A673 (cell line): ENCODE measurements at regions of chr20 and their contacts with region 1.

Region 1: DNA sequence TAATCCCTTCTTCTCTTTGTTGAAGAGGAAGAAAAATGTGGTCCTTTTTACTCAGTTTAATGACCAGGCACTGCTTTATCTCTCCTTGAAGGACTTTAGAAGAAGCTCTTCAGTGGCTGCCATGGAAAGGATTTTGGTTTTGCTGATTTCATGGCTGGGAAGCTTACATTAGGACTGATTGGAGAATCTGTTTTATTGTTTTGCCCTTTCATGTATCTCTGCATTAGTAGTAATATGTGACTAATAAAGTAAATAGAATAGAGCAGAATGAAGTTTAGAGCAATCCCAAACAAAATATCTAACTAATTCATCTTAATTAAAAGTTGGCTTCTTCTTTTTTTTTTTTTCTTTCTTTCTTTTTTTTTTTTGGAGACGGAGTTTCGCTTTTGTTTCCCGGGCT is 502.9 kb downstream of the HAO1 start:
- DNase-seq: no peak
- H3K4me3 ChIP-seq: no peak overlapping the region
- H3K27ac ChIP-seq: no peak overlapping the region
- H3K4me1 ChIP-seq: no peaks in the 10 kb centered on the region
- H3K27me3 ChIP-seq: peaks cover 7% of the 10 kb centered on the region
- CTCF ChIP-seq: no peak

Region 2: GRCh38 chr20:7305976-7306375 is 131.3 kb before region 1 on chr20:
- CTCF ChIA-PET with region 1: no interaction called
- POLR2A ChIA-PET with region 1: no interaction called
- intact Hi-C with region 1: no loop called
- DNase-seq: no peak
- H3K4me3 ChIP-seq: no peak overlapping the region
- H3K27ac ChIP-seq: no peak overlapping the region
- H3K4me1 ChIP-seq: no peaks in the 10 kb centered on the region
- H3K27me3 ChIP-seq: no peaks in the 10 kb centered on the region
- CTCF ChIP-seq: no peak

Region 3: GRCh38 chr20:7333841-7334240 is 103.5 kb before region 1 on chr20:
- CTCF ChIA-PET with region 1: no interaction called
- POLR2A ChIA-PET with region 1: no interaction called
- intact Hi-C with region 1: no loop called
- DNase-seq: no peak
- H3K4me3 ChIP-seq: no peak overlapping the region
- H3K27ac ChIP-seq: no peak overlapping the region
- H3K4me1 ChIP-seq: no peaks in the 10 kb centered on the region
- H3K27me3 ChIP-seq: no peaks in the 10 kb centered on the region
- CTCF ChIP-seq: no peak

Region 4: DNA sequence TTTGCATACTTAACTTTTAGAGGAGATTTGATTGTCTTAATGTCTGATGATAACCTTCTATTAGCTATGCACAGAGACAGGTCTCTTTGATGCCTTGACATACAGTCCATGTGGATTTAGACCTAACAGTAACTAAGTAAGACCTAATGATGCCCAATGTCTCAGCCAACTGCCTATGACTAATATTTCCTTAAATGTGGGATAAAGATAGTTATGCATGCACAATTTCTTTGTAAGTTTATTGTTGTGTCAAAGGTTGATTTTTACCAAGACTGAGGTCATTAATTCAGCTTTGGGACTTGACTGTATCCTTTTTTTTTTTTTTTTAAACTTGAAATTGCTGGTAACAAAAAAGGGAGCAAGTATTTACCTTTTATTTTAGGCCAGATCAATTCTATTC is 53.0 kb after region 1 on chr20:
- CTCF ChIA-PET with region 1: no interaction called
- POLR2A ChIA-PET with region 1: no interaction called
- intact Hi-C with region 1: loop called (anchors 5 kb)
- DNase-seq: no peak
- H3K4me3 ChIP-seq: no peak overlapping the region
- H3K27ac ChIP-seq: no peak overlapping the region
- H3K4me1 ChIP-seq: no peaks in the 10 kb centered on the region
- H3K27me3 ChIP-seq: no peaks in the 10 kb centered on the region
- CTCF ChIP-seq: no peak